Left colon (tissue), 2 donors: ENCODE measurements at regions of chr4 and their contacts with region 1.

Region 1: DNA sequence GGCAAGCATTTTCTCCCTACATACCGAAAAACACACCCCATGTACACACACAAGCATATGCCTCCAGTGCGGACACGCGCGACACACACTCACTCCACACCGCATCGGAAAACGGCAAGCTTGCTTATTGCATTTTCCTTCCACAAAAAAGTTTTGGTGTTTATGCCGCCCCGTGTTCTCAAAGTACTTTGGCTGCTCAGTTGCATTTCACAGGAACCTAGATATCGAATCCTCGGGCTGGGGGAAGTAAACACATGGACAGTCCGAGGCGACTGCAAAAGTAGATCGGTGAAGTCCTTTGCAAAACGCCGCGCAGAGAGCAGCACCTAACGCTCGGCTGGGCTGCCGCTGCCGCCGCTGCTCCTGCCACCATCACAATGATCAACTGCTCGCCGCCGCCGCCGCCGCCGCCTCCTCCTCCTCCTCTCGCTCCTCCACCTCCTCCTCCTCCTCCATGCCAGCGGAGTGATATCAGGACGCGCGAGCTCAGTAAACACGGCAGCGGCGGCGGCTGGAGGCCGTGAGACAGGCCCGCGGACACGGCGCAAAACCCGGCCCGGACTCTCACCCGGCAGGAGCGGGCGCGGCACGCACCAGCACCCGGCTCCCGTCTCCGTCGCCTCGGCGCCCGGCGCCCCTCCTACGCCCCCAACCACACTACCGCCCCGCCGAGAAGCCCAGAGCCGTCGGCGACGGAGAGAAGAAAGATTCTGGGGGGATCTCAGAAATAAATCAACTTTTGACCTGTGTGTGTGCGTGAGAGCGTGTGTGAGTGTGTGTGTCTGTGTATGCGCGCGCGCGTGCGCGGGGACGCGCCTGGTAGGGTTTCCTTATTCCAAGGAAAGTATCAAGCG is at the start of gene MAML3:
- DNase-seq: peak; percentile 94 to 96
- ATAC-seq: peak; percentile 60
- total RNA-seq, gene MAML3: 11.8 to 14.6 TPM

Region 2: GRCh38 chr4:140243278-140243753 is 89.4 kb after region 1 on chr4:
- intact Hi-C with region 1: loop called in 1 of 2 experiments (anchors 5 kb)
- DNase-seq: peak; percentile 75 to 81
- ATAC-seq: peak; percentile 88